ENCODE measurements at regions of chr1 and their contacts with region 1.

Region 1: GRCh38 chr1:172662464-172663109 is 3.7 kb downstream of the FASLG start:
- DNase-seq: peak; percentile 97
- H3K4me3 Mint-ChIP-seq: peak overlapping the region; percentile 78
- H3K27ac Mint-ChIP-seq: peak overlapping the region; percentile 91
- H3K4me1 Mint-ChIP-seq: peaks cover 81% of the 10 kb centered on the region
- H3K27me3 Mint-ChIP-seq: peaks cover 10% of the 10 kb centered on the region

Region 2: DNA sequence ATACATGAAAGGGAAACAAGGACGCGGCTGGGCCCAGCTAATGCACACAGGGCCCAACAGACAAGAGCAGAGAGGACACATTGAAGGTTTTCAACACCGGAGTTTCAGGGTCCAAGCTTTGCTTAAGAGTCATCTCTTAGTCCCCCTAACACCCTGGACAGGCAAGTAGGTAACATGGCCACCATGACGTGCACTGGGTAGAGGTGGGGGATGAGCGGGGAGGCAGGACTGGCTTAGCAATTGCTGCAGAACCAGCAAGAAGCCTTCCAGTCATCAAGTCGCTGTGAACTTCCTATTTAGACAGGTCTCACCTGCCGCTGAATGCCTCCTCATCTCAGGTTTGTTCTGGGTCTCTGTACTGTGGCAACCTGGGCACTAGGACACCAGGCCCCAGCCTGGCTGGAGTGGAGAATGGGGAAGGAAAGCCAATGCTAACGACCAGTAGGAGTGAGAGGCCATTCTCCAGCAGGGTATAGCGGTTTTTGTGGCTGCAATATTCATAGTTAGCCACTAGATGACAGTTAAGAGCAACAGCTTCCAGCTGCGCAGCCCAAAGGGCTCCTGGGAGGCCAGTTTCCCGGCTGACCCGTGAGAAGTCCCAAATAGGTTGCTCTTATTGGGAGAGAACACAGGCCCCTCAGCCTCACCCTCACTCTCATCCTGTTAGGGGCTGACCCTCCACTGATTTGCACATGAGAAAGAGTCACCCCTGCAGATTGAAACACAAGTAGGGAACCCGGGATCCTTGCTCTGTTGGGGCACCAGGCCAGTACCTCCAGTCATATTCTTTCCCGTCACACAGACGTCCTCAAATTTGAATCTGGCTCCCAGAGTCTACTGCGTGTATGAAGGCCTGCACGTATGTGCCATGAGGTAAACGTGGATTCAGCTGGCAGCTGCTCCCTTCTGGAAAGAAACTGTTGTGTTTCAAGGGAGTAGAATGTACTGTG is 212.7 kb before region 1 on chr1:
- CTCF ChIA-PET with region 1: interaction called, 5 read pairs
- POLR2A ChIA-PET with region 1: no interaction called
- intact Hi-C with region 1: loop called (anchors 5 kb)
- DNase-seq: peak; percentile 47
- H3K4me3 Mint-ChIP-seq: peak overlapping the region; percentile 36
- H3K27ac Mint-ChIP-seq: no peak overlapping the region
- H3K4me1 Mint-ChIP-seq: peaks cover 31% of the 10 kb centered on the region
- H3K27me3 Mint-ChIP-seq: no peaks in the 10 kb centered on the region

Region 3: GRCh38 chr1:172609528-172609927 is 53.1 kb before region 1 on chr1:
- CTCF ChIA-PET with region 1: interaction called, 18 read pairs
- POLR2A ChIA-PET with region 1: interaction called, 5 read pairs
- intact Hi-C with region 1: no loop called
- DNase-seq: no peak
- H3K4me3 Mint-ChIP-seq: no peak overlapping the region
- H3K27ac Mint-ChIP-seq: no peak overlapping the region
- H3K4me1 Mint-ChIP-seq: peaks cover 6% of the 10 kb centered on the region
- H3K27me3 Mint-ChIP-seq: no peaks in the 10 kb centered on the region

Region 4: DNA sequence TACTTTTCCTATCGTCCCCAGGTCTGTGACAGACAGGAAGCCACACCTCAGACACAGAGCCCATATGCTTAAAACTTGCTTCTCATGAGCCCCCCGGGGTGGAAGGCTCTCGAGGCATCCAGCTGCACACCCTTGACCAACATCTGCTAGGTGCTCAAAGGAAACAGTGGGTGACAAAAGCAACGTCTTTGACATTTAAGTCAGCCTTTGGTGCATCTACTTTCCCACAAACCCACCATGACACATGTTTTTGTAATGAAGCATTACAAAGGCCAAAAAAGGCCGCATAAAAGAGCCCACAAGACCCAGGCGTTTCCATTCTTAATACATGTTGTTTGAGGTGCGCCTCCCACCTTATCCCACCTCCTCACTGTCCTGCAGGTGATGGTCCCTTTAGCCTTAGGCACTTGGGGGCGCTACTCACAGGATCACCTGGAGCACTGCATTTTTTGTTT is 15.4 kb before region 1 on chr1:
- CTCF ChIA-PET with region 1: interaction called, 4 read pairs
- POLR2A ChIA-PET with region 1: interaction called, 4 read pairs
- intact Hi-C with region 1: loop called (anchors 1 kb)
- DNase-seq: peak; percentile 62
- H3K4me3 Mint-ChIP-seq: no peak overlapping the region
- H3K27ac Mint-ChIP-seq: no peak overlapping the region
- H3K4me1 Mint-ChIP-seq: peaks cover 52% of the 10 kb centered on the region
- H3K27me3 Mint-ChIP-seq: peaks cover 20% of the 10 kb centered on the region

Region 5: DNA sequence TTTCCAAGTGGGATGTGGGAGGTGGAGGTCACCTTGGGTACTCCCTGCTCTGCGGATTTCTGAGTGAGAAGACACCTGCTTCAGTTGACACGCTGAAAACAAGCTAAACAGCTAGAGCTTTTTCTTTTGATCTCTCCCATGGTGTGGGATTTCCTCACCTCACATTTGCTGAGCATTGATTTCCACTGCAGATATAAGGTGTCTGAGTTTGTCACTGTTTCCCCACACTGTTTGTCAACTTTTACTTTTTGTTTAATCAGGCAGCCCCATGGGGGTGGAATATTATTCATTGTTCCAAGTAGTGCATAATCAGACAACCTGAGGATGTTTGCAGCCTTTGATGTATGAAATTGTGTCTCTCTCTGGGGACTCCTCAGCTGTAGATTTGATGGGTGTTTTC is 45.9 kb after region 1 on chr1:
- CTCF ChIA-PET with region 1: interaction called, 4 read pairs
- POLR2A ChIA-PET with region 1: interaction called, 5 read pairs
- intact Hi-C with region 1: loop called (anchors 1 kb)
- DNase-seq: peak; percentile 49
- H3K4me3 Mint-ChIP-seq: peak overlapping the region; percentile 48
- H3K27ac Mint-ChIP-seq: peak overlapping the region; percentile 46
- H3K4me1 Mint-ChIP-seq: peaks cover 46% of the 10 kb centered on the region
- H3K27me3 Mint-ChIP-seq: no peaks in the 10 kb centered on the region

Measured in activated CD4-positive, alpha-beta memory T cell treated with anti-CD3 and anti-CD28 coated beads for 36 hours (primary cell).